A549 (cell line): ENCODE measurements at regions of chr3 and their contacts with region 1.

Region 1: DNA sequence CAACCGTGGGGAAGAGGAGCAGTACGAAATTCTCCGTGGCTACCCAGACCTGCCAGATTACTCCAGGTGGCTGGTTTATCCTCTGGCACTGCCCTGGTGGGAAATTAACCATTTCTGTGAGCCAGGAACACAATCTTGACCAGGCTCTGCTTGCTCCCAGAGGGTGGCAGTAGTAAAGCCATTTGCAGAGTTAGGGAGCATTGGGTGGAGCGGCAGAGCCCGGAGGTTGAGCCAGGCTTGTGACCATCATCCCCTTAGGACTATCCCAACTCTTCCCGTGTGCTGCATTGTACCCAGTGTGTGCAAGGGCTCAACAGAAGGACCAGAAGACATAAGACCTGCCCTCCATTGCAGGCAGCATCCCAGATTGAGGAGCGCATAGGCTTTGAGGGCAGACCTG is 5.3 kb downstream of the KNG1 start:
- DNase-seq: peak; percentile 21 to 53
- ATAC-seq: peak; percentile 93 to 99
- H3K4me3 ChIP-seq: no peak overlapping the region
- H3K27ac ChIP-seq: peak overlapping the region; percentile 42 to 44; a peak in 1 of 6 replicates
- H3K4me1 ChIP-seq: peaks cover 8% of the 10 kb centered on the region
- CTCF ChIP-seq: peak; percentile 44
- EP300 ChIP-seq: no peak
- POLR2A ChIP-seq: no peak
- RAD21 ChIP-seq: peak; percentile 55 to 68

Region 2: GRCh38 chr3:186754006-186754405 is 31.6 kb after region 1 on chr3:
- CTCF ChIA-PET with region 1: interaction called, 15 read pairs
- POLR2A ChIA-PET with region 1: no interaction called
- DNase-seq: no peak
- ATAC-seq: no peak
- H3K4me3 ChIP-seq: no peak overlapping the region
- H3K27ac ChIP-seq: peak overlapping the region; percentile 73 to 77; a peak in 3 of 6 replicates
- H3K4me1 ChIP-seq: peaks cover 14% of the 10 kb centered on the region; the same call in 2 of the 3 replicates
- CTCF ChIP-seq: no peak
- EP300 ChIP-seq: no peak
- POLR2A ChIP-seq: no peak
- RAD21 ChIP-seq: no peak